HepG2 (cell line): ENCODE measurements at regions of chr4 and their contacts with region 1.

Region 1: GRCh38 chr4:123477711-123478209 is 81.2 kb downstream of the SPRY1 start:
- DNase-seq: peak; percentile 41
- ATAC-seq: peak; percentile 44
- H3K4me3 ChIP-seq: peak overlapping the region in 2 of 3 experiments; percentile 11 to 29; a peak in 2 of 6 replicates
- H3K27ac ChIP-seq: peak overlapping the region; percentile 89
- H3K4me1 ChIP-seq: peaks cover 67% of the 10 kb centered on the region
- H3K27me3 ChIP-seq: no peaks in the 10 kb centered on the region
- CTCF ChIP-seq: 0 out of 2 replicates have a peak, but pooled peaks have one; percentile 10
- EP300 ChIP-seq: no peak
- POLR2A ChIP-seq: 0 out of 4 replicates have a peak, but pooled peaks of 1 of the 2 experiments have one; percentile 25
- RAD21 ChIP-seq: no peak

Region 2: GRCh38 chr4:123350191-123350544 is 127.6 kb before region 1 on chr4:
- CTCF ChIA-PET with region 1: no interaction called
- POLR2A ChIA-PET with region 1: no interaction called
- in situ Hi-C with region 1: no loop called
- intact Hi-C with region 1: loop called (anchors 2 kb)
- DNase-seq: peak; percentile 81
- ATAC-seq: peak; percentile 91
- H3K4me3 ChIP-seq: peak overlapping the region in 1 of 3 experiments; percentile 15; a peak in 1 of 6 replicates
- H3K27ac ChIP-seq: no peak overlapping the region
- H3K4me1 ChIP-seq: peaks cover 48% of the 10 kb centered on the region
- H3K27me3 ChIP-seq: no peaks in the 10 kb centered on the region
- CTCF ChIP-seq: peak; percentile 78
- EP300 ChIP-seq: 0 out of 4 replicates have a peak, but pooled peaks of 1 of the 2 experiments have one; percentile 33
- POLR2A ChIP-seq: no peak
- RAD21 ChIP-seq: peak; percentile 47

Region 3: GRCh38 chr4:123380728-123381716 is 96.7 kb before region 1 on chr4:
- CTCF ChIA-PET with region 1: no interaction called
- POLR2A ChIA-PET with region 1: no interaction called
- in situ Hi-C with region 1: no loop called
- intact Hi-C with region 1: no loop called
- DNase-seq: no peak
- ATAC-seq: no peak
- H3K4me3 ChIP-seq: no peak overlapping the region
- H3K27ac ChIP-seq: no peak overlapping the region
- H3K4me1 ChIP-seq: no peaks in the 10 kb centered on the region
- H3K27me3 ChIP-seq: no peaks in the 10 kb centered on the region
- CTCF ChIP-seq: no peak
- EP300 ChIP-seq: no peak
- POLR2A ChIP-seq: no peak
- RAD21 ChIP-seq: no peak

Region 4: GRCh38 chr4:123418351-123418931 is 59.3 kb before region 1 on chr4:
- CTCF ChIA-PET with region 1: no interaction called
- POLR2A ChIA-PET with region 1: interaction called, 15 read pairs
- in situ Hi-C with region 1: no loop called
- intact Hi-C with region 1: loop called (anchors 1 kb)
- DNase-seq: peak; percentile 97
- ATAC-seq: peak; percentile 97
- H3K4me3 ChIP-seq: peak overlapping the region in 2 of 3 experiments; percentile 6 to 30; a peak in 2 of 6 replicates
- H3K27ac ChIP-seq: peak overlapping the region; percentile 70
- H3K4me1 ChIP-seq: peaks cover 72% of the 10 kb centered on the region
- H3K27me3 ChIP-seq: no peaks in the 10 kb centered on the region
- CTCF ChIP-seq: no peak
- EP300 ChIP-seq: peak in 1 of 2 experiments; percentile 95; a peak in 2 of 4 replicates
- POLR2A ChIP-seq: no peak
- RAD21 ChIP-seq: peak; percentile 21; the same call in 1 of the 2 replicates

Region 5: DNA sequence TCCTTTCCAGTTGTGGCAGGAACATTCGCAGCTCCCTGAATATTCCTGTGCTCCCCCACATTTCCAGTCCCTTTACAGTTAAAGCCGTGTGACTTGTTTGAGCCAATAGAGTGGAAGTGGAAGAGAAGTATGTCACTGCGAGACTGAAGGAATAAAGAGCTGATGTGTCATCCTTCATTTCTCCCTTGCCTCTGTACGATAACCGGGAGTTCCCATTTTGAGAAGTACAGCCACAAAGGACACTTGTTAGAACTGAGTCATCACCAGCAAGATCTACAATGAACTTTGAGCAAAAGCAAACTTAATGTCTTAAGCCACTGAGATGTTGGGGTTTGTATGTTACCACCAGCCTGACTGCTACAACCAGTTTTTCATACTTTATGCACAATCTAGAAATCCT is 11.2 kb after region 1 on chr4:
- CTCF ChIA-PET with region 1: no interaction called
- POLR2A ChIA-PET with region 1: interaction called, 16 read pairs
- in situ Hi-C with region 1: no loop called
- intact Hi-C with region 1: no loop called
- DNase-seq: peak; percentile 80
- ATAC-seq: peak; percentile 74
- H3K4me3 ChIP-seq: no peak overlapping the region
- H3K27ac ChIP-seq: peak overlapping the region; percentile 17
- H3K4me1 ChIP-seq: peaks cover 40% of the 10 kb centered on the region
- H3K27me3 ChIP-seq: no peaks in the 10 kb centered on the region
- CTCF ChIP-seq: no peak
- EP300 ChIP-seq: peak in 1 of 2 experiments; percentile 50; a peak in 2 of 4 replicates
- POLR2A ChIP-seq: no peak
- RAD21 ChIP-seq: no peak

Region 6: GRCh38 chr4:123555233-123555806 is 77.6 kb after region 1 on chr4:
- CTCF ChIA-PET with region 1: no interaction called
- POLR2A ChIA-PET with region 1: interaction called, 47 read pairs
- in situ Hi-C with region 1: no loop called
- intact Hi-C with region 1: loop called (anchors 1 kb)
- DNase-seq: peak; percentile 98
- ATAC-seq: peak; percentile 97
- H3K4me3 ChIP-seq: peak overlapping the region; percentile 25 to 54 (median 39); a peak in 5 of 6 replicates
- H3K27ac ChIP-seq: peak overlapping the region; percentile 98
- H3K4me1 ChIP-seq: peaks cover 76% of the 10 kb centered on the region
- H3K27me3 ChIP-seq: no peaks in the 10 kb centered on the region
- CTCF ChIP-seq: peak; percentile 8; the same call in 1 of the 2 replicates
- EP300 ChIP-seq: peak; percentile 72 to 99
- POLR2A ChIP-seq: peak in 1 of 2 experiments; percentile 59; a peak in 2 of 4 replicates
- RAD21 ChIP-seq: peak; percentile 50; the same call in 1 of the 2 replicates

Region 7: GRCh38 chr4:123588631-123589241 is 111.0 kb after region 1 on chr4:
- CTCF ChIA-PET with region 1: no interaction called
- POLR2A ChIA-PET with region 1: no interaction called
- in situ Hi-C with region 1: no loop called
- intact Hi-C with region 1: loop called (anchors 1 kb)
- DNase-seq: peak; percentile 86
- ATAC-seq: peak; percentile 87
- H3K4me3 ChIP-seq: no peak overlapping the region
- H3K27ac ChIP-seq: no peak overlapping the region
- H3K4me1 ChIP-seq: peaks cover 29% of the 10 kb centered on the region
- H3K27me3 ChIP-seq: no peaks in the 10 kb centered on the region
- CTCF ChIP-seq: no peak
- EP300 ChIP-seq: no peak
- POLR2A ChIP-seq: no peak
- RAD21 ChIP-seq: no peak

Region 8: DNA sequence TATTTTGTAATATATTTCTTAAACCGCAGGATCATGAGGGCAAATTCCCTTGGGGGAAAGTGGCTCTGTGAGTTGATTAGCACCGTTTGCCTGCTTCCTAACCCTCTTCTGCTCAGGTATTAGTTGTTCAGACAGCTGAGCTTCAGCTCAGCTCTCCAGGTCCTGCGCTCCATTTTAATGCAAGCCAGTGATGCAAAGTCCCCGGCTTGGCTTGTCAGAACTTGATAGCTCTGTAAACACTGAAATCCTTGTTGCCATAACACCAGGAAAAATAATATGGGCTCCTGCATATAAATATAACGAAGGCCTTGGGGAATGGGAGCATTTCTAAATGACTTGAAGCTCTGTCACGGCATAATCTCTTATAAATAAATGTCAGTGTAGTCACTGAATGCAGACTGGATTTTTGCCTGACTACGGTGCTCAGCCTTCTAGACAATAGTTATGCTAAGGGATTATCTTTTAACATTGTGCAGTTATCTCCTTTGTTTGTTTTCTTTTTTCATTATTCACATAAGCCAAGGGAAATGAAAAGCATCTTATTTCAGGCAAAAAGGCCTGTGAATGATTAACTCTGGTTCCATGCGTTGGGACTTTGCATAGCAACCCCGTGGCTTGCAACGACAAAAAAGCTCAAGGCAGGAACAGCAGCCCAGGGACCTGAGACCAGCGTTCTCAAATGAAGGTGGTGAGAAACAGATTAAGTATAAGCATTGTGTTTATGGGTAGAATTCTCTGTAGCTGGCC is 172.1 kb after region 1 on chr4:
- CTCF ChIA-PET with region 1: no interaction called
- POLR2A ChIA-PET with region 1: no interaction called
- in situ Hi-C with region 1: no loop called
- intact Hi-C with region 1: loop called (anchors 2 kb)
- DNase-seq: peak; percentile 92
- ATAC-seq: peak; percentile 97
- H3K4me3 ChIP-seq: peak overlapping the region; percentile 23 to 60 (median 47); a peak in 4 of 6 replicates
- H3K27ac ChIP-seq: peak overlapping the region; percentile 92
- H3K4me1 ChIP-seq: peaks cover 60% of the 10 kb centered on the region
- H3K27me3 ChIP-seq: no peaks in the 10 kb centered on the region
- CTCF ChIP-seq: no peak
- EP300 ChIP-seq: peak; percentile 58 to 73
- POLR2A ChIP-seq: peak; percentile 45 to 92; a peak in 3 of 4 replicates
- RAD21 ChIP-seq: no peak

Region 9: DNA sequence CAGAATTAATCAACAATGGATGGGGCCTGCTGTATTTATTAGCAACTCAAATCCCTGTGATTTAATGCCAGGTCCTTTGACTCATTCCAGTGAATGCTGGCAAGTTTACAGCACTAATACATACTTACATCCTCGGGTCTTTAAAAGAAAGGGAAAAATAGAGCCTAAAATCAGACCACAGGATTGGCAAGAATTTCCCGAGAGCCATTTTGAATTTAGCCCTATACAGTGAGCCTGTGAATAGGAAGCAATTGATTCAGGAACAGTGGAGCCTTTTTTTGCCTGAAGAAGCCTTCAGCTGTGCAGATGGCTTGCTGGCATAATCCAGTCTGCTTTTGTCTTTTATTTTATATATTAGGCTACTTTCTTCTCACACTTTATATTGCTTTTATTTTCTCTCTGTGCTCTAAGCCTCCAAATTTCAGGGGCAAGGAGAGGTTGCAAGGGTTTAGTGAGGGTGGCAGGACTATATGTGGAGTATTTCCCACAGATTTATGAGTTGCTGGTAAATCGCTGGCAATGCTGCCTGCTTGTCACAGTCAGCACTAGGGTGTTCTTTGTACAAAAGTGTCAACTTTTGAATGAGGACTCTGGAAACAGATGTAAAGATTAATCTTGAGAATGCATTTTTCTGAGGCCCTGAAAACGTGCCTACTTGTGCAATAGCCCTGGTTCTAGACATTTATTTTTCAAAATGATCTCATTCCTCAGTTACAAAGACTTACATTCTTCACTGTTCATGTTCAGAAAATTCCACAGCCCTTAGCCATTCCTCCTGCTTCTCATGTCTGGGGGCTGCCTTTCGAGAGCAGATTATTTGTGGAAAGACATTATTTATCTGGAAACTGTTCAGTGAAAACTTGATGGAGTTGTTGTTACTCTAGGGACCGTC is 222.4 kb after region 1 on chr4:
- CTCF ChIA-PET with region 1: no interaction called
- POLR2A ChIA-PET with region 1: no interaction called
- in situ Hi-C with region 1: no loop called
- intact Hi-C with region 1: no loop called
- DNase-seq: peak; percentile 31
- ATAC-seq: no peak
- H3K4me3 ChIP-seq: no peak overlapping the region
- H3K27ac ChIP-seq: no peak overlapping the region
- H3K4me1 ChIP-seq: no peaks in the 10 kb centered on the region
- H3K27me3 ChIP-seq: no peaks in the 10 kb centered on the region
- CTCF ChIP-seq: no peak
- EP300 ChIP-seq: no peak
- POLR2A ChIP-seq: no peak
- RAD21 ChIP-seq: no peak